Activated CD4-positive, alpha-beta memory T cell treated with anti-CD3 and anti-CD28 coated beads, Interleukin-2, amount 10 ng/mL, durations not matched to agents 7 days and 5 days (primary cell): ENCODE measurements at regions of chr6 and their contacts with region 1.

Region 1: GRCh38 chr6:34414999-34415858 is 10.6 kb downstream of the RPS10 start:
- DNase-seq: peak; percentile 35
- H3K4me3 Mint-ChIP-seq: no peak overlapping the region
- H3K27ac Mint-ChIP-seq: no peak overlapping the region
- H3K4me1 Mint-ChIP-seq: peaks cover 15% of the 10 kb centered on the region
- H3K27me3 Mint-ChIP-seq: no peaks in the 10 kb centered on the region

Region 2: GRCh38 chr6:34161857-34162515 is 253.2 kb before region 1 on chr6:
- CTCF ChIA-PET with region 1: interaction called, 11 read pairs
- POLR2A ChIA-PET with region 1: no interaction called
- DNase-seq: no peak
- H3K4me3 Mint-ChIP-seq: no peak overlapping the region
- H3K27ac Mint-ChIP-seq: no peak overlapping the region
- H3K4me1 Mint-ChIP-seq: no peaks in the 10 kb centered on the region
- H3K27me3 Mint-ChIP-seq: peaks cover 28% of the 10 kb centered on the region

Region 3: DNA sequence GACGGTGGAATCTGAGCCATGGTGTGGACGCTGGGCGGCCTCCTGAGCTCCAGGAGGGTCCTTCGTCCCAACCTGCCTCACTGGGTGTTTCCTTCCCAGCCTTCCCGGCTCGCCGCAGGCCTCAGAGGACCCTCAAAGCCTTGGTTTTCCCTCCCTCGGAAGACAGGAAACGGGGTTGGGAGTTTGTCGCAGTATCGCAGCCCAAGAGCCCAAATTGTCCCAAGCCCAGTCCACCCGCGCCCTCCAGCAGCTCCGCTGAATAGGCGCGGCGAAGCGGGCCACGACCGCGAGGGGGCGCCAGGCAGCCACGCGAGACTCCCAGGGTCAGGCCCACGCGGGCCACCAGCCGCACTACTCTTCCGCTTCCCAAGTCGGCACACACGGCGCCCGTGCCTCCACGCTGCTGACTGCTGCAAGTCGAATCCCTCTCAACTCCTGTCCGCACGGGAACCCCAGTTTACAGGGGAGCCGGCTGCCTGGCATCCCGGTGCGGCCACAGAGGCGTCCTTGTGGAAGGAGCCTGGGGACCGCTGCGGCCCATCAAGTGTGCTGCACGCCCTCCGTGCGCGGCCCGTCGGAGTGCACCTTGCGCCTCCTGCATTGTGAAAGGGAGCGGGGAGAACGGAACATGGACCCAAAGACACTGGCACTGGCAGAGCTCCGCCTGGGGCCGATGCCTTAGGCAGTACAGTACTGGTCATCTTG is 219.0 kb before region 1 on chr6:
- CTCF ChIA-PET with region 1: interaction called, 39 read pairs
- POLR2A ChIA-PET with region 1: interaction called, 3 read pairs
- DNase-seq: peak; percentile 87
- H3K4me3 Mint-ChIP-seq: peak overlapping the region; percentile 73
- H3K27ac Mint-ChIP-seq: no peak overlapping the region
- H3K4me1 Mint-ChIP-seq: peaks cover 3% of the 10 kb centered on the region
- H3K27me3 Mint-ChIP-seq: peaks cover 11% of the 10 kb centered on the region

Region 4: DNA sequence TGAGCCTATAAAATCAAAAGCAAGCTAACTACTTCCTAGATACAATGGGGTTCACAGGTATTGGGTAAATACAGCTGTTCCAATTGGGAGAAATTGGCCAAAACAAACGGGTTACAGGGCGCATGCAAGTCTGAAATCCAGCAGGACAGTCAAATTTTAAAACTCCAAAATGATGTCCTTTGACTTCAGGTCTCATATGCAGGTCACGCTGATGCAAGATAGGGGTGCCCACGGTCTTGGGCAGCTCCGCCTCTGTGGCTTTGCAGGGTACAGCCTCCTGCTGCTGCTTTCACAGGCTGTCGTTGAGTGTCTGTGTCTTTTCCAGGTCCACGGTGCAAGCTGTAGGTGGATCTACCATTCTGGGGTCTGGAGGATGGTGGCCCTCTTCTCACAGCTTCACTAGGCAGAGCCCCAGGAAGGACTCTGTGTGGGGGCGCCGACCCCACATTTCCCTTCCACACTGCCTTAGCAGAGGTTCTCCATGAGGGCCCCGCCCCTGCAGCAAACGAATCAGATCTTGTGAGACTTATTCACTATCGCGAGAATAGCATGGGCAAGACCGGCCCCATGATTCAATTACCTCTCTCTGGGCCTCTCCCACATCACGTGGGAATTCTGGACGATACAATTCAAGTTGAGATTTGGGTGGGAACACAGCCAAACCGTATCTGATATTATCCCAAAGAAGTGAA is 154.5 kb before region 1 on chr6:
- CTCF ChIA-PET with region 1: no interaction called
- POLR2A ChIA-PET with region 1: no interaction called
- DNase-seq: no peak
- H3K4me3 Mint-ChIP-seq: no peak overlapping the region
- H3K27ac Mint-ChIP-seq: no peak overlapping the region
- H3K4me1 Mint-ChIP-seq: no peaks in the 10 kb centered on the region
- H3K27me3 Mint-ChIP-seq: no peaks in the 10 kb centered on the region

Region 5: DNA sequence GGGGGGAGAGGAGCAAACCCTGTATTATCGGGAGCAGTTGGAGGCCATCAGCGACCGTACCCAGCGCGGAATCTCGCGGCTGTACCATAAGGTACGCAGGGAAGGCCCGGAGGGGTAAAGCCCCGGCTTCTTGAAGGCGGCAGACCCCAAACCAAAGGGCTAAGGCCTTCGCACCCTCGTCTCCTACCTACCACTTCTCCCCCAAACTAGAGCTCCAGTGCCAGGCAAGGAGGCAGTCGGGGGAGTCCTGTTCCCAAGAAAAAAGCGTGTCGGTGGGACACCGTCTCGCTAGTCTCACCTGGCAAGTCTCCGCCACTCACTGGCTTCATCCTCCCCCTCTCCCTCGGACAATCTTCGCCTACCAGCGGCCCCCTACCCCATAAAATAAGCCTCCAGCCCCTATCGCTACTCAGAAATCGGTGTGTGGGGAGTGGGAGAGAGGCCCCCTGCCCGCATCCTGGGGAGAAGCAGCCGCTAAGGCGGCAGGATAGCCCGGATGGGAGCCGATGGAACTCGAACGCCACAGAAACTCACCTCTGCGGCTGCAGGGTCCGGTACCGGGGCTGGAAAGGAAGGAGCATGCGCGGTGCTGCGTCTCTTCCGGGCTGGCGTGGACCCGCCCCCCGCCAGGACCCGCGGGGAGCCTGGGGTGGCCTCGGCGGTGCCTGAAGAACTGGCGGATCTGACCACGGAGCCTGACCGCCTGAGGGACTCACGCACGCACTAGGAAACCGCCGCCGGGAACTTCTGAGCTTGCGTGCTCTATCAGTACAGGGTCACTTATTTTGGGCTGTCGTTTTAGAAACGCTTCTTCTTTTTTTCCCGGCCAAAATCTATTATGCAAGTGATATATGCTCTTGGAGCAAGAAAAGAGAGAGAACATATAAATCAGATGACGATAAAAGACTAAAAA is 10.5 kb after region 1 on chr6 and contains the start of gene RPS10:
- CTCF ChIA-PET with region 1: interaction called, 7 read pairs
- POLR2A ChIA-PET with region 1: interaction called, 30 read pairs
- DNase-seq: peak; percentile 90
- H3K4me3 Mint-ChIP-seq: peak within 1 kb of the TSS; percentile 97
- H3K27ac Mint-ChIP-seq: peak within 1 kb of the TSS; percentile 93
- H3K4me1 Mint-ChIP-seq: peaks cover 40% of the 10 kb centered on the region
- H3K27me3 Mint-ChIP-seq: peaks cover 8% of the 10 kb centered on the region
- total RNA-seq, gene RPS10: 1,296 to 1,320 TPM

Region 6: GRCh38 chr6:34436803-34437643 is 21.8 kb after region 1 on chr6:
- CTCF ChIA-PET with region 1: no interaction called
- POLR2A ChIA-PET with region 1: no interaction called
- DNase-seq: no peak
- H3K4me3 Mint-ChIP-seq: no peak overlapping the region
- H3K27ac Mint-ChIP-seq: no peak overlapping the region
- H3K4me1 Mint-ChIP-seq: no peaks in the 10 kb centered on the region
- H3K27me3 Mint-ChIP-seq: peaks cover 1% of the 10 kb centered on the region